Caco-2 (cell line): ENCODE measurements at regions of chr13 and their contacts with region 1.

Region 1: GRCh38 chr13:79782541-79783205 is 301.7 kb downstream of the NDFIP2 start:
- DNase-seq: peak; percentile 76 to 87
- H3K4me3 ChIP-seq: no peak overlapping the region
- H3K4me3 Mint-ChIP-seq: peak overlapping the region; percentile 42
- H3K27ac Mint-ChIP-seq: peak overlapping the region; percentile 78
- H3K4me1 ChIP-seq: peaks cover 68% of the 10 kb centered on the region
- H3K4me1 Mint-ChIP-seq: peaks cover 55% of the 10 kb centered on the region
- H3K27me3 ChIP-seq: no peaks in the 10 kb centered on the region
- H3K27me3 Mint-ChIP-seq: no peaks in the 10 kb centered on the region
- CTCF ChIP-seq: no peak

Region 2: GRCh38 chr13:79799059-79799867 is 16.6 kb after region 1 on chr13:
- CTCF ChIA-PET with region 1: interaction called, 3 read pairs
- POLR2A ChIA-PET with region 1: interaction called, 3 read pairs
- intact Hi-C with region 1: loop called (anchors 1 kb)
- DNase-seq: no peak
- H3K4me3 ChIP-seq: no peak overlapping the region
- H3K4me3 Mint-ChIP-seq: no peak overlapping the region
- H3K27ac Mint-ChIP-seq: no peak overlapping the region
- H3K4me1 ChIP-seq: peaks cover 52% of the 10 kb centered on the region
- H3K4me1 Mint-ChIP-seq: peaks cover 26% of the 10 kb centered on the region
- H3K27me3 ChIP-seq: no peaks in the 10 kb centered on the region
- H3K27me3 Mint-ChIP-seq: no peaks in the 10 kb centered on the region
- CTCF ChIP-seq: no peak

Region 3: DNA sequence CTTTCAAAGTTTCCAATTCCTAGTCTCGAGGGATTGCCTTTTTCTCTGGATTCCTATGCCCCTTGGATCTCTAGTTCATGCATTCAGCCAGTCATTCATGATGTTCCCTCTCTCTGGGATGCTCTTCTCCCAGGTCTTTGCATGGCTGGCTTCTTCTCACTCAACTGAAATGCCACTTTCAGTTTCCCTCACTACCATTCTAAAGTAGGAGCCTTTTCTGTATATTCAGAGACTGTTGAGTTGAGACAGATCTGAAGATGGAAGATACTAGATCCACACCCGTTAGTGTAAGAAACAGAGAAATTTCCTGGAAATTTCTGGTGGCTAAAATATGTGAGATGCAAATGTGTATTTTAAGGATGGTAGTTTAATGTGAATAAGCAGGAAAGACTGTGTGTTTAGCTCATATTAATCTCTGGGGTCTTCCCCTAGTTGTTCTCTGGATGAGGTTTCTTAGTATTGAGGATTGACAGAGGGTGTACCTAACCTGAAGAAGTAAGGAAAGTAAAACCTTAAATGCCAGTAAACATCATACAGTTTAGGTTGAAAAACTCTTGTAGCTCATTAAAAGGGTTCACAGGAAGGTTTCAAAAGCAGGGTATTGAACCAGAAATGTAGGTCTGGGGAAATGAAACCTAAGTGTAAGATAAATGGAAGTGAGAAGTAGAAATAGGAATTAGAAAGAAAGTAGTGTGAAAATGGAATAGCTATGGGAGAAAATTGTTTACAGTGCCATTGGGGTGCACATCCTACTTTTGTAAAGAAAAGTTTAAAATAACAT is 29.6 kb after region 1 on chr13:
- CTCF ChIA-PET with region 1: no interaction called
- POLR2A ChIA-PET with region 1: interaction called, 3 read pairs
- intact Hi-C with region 1: loop called (anchors 1 kb)
- DNase-seq: no peak
- H3K4me3 ChIP-seq: no peak overlapping the region
- H3K4me3 Mint-ChIP-seq: no peak overlapping the region
- H3K27ac Mint-ChIP-seq: peak overlapping the region; percentile 88
- H3K4me1 ChIP-seq: peaks cover 29% of the 10 kb centered on the region
- H3K4me1 Mint-ChIP-seq: peaks cover 31% of the 10 kb centered on the region
- H3K27me3 ChIP-seq: no peaks in the 10 kb centered on the region
- H3K27me3 Mint-ChIP-seq: no peaks in the 10 kb centered on the region
- CTCF ChIP-seq: no peak

Region 4: DNA sequence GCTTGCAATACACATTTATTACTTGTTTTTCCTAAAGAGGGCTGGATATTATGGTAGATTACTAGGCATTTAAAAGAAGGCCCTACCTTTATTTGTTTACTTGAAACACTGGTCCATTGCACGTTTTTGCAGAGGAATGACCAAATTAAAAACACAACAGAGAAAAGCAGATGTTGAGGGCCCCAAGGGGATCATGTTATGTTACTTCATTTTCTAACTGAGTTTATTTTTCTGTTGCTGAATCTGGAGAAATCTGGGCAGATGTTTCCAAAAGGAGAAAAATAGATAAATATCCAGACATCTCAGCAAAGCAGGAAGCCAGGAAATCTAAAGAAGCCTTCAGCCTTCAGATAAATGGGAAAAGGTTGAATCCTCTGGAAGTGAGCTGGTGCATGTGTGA is 51.3 kb after region 1 on chr13:
- CTCF ChIA-PET with region 1: no interaction called
- POLR2A ChIA-PET with region 1: no interaction called
- intact Hi-C with region 1: loop called (anchors 2 kb)
- DNase-seq: no peak
- H3K4me3 ChIP-seq: no peak overlapping the region
- H3K4me3 Mint-ChIP-seq: no peak overlapping the region
- H3K27ac Mint-ChIP-seq: no peak overlapping the region
- H3K4me1 ChIP-seq: peaks cover 18% of the 10 kb centered on the region
- H3K4me1 Mint-ChIP-seq: peaks cover 19% of the 10 kb centered on the region
- H3K27me3 ChIP-seq: no peaks in the 10 kb centered on the region
- H3K27me3 Mint-ChIP-seq: no peaks in the 10 kb centered on the region
- CTCF ChIP-seq: no peak

Region 5: GRCh38 chr13:79909644-79910043 is 127.0 kb after region 1 on chr13:
- CTCF ChIA-PET with region 1: no interaction called
- POLR2A ChIA-PET with region 1: no interaction called
- intact Hi-C with region 1: loop called (anchors 1 kb)
- DNase-seq: no peak
- H3K4me3 ChIP-seq: no peak overlapping the region
- H3K4me3 Mint-ChIP-seq: no peak overlapping the region
- H3K27ac Mint-ChIP-seq: no peak overlapping the region
- H3K4me1 ChIP-seq: peaks cover 21% of the 10 kb centered on the region
- H3K4me1 Mint-ChIP-seq: peaks cover 36% of the 10 kb centered on the region
- H3K27me3 ChIP-seq: no peaks in the 10 kb centered on the region
- H3K27me3 Mint-ChIP-seq: no peaks in the 10 kb centered on the region
- CTCF ChIP-seq: no peak